ENCODE measurements at regions of chr6 and their contacts with region 1.

Region 1: GRCh38 chr6:15274692-15275387 is 29.0 kb downstream of the JARID2 start:
- DNase-seq: no peak
- CTCF ChIP-seq: no peak

Region 2: GRCh38 chr6:15254070-15254841 is 20.6 kb before region 1 on chr6:
- CTCF ChIA-PET with region 1: interaction called, 12 read pairs
- POLR2A ChIA-PET with region 1: interaction called, 3 read pairs
- DNase-seq: no peak
- CTCF ChIP-seq: peak; percentile 31

Region 3: DNA sequence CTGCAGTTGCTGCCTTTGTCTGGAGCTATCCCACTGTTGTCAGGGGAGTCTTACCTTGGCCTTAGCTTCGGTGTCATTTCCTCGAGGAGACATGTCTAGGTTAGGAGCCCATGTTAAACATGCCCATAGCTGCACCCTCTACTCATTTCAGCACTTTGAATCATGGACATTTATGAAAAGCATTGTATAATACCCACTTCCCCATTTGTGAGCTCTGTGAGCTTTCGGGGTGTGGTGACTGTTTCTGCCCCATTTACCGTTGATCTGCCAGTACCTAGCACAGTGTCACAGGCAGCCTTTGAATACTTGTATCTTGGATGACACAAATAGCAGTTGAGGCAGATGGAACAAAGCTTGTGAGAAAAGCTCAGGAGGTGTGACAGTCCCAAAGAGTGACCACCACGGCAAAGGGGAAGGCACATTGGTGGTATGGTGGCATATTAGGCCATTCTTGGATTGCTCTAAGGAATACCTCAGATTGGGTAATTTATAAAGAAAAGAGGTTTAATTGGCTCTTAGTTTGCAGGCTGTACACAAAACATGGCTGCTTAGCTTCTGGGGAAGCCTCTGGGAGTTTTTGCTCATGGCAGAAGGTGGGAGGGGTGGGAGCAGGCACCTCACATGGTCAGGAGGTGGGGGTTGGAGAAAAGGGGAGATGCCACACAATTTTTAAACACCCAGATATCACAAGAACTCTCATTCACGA is 13.0 kb after region 1 on chr6:
- CTCF ChIA-PET with region 1: interaction called, 16 read pairs
- POLR2A ChIA-PET with region 1: no interaction called
- DNase-seq: peak; percentile 78
- CTCF ChIP-seq: no peak